ENCODE measurements at regions of chr12 and their contacts with region 1.

Region 1: GRCh38 chr12:22230280-22230794 is 104.2 kb downstream of the ST8SIA1 start:
- DNase-seq: no peak
- H3K4me3 ChIP-seq: no peak overlapping the region
- H3K27ac ChIP-seq: no peak overlapping the region
- H3K27me3 ChIP-seq: no peaks in the 10 kb centered on the region
- CTCF ChIP-seq: no peak

Region 2: DNA sequence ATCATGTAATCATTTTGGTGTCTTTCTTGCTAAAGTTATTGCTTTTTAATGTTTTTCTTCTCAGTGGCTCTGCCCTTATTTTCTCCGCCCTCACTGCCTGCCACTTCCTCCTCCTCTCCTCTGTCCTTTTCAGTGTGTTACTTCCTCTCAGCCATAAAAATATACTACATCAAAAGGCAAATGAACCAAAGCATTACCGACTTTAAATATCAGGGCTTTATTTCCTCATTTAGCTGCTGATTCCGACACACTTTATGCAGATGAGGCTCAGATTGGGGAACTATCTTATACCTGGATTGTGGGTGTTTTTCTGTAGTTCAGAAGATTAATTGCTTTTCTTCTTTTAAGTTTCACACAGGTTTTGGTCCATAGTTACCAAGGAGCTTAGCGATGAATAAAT is 66.2 kb before region 1 on chr12:
- CTCF ChIA-PET with region 1: no interaction called
- POLR2A ChIA-PET with region 1: no interaction called
- DNase-seq: no peak
- H3K4me3 ChIP-seq: no peak overlapping the region
- H3K27ac ChIP-seq: no peak overlapping the region
- H3K27me3 ChIP-seq: no peaks in the 10 kb centered on the region
- CTCF ChIP-seq: no peak

Region 3: GRCh38 chr12:22190969-22191368 is 39.4 kb before region 1 on chr12:
- CTCF ChIA-PET with region 1: interaction called, 10 read pairs
- POLR2A ChIA-PET with region 1: no interaction called
- DNase-seq: no peak
- H3K4me3 ChIP-seq: no peak overlapping the region
- H3K27ac ChIP-seq: no peak overlapping the region
- H3K27me3 ChIP-seq: no peaks in the 10 kb centered on the region
- CTCF ChIP-seq: no peak